Activated naive CD4-positive, alpha-beta T cell treated with anti-CD3 and anti-CD28 coated beads for 36 hours (primary cell): ENCODE measurements at regions of chr2 and their contacts with region 1.

Region 1: DNA sequence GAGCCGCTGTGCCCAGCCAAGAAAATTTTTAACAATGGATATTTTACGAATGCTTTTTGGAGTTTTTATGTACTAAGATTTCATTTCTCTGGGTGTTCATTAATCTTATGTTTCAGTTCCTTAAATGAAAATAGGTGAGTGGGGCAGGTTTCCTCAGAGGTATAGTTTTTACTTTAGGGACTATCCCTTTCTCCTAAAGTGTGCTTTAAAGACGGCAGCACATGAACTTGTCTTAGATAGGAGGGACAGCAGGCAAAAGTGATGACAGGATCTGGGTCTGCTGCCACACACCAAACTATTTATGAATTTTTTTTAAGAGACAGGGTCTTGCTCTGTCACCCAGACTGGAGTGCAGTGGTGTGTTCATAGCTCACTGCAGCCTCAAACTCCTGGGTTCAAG is 8.0 kb upstream of the REL start:
- DNase-seq: peak; percentile 51
- H3K4me3 Mint-ChIP-seq: no peak overlapping the region
- H3K27ac Mint-ChIP-seq: peak overlapping the region; percentile 69
- H3K4me1 Mint-ChIP-seq: peaks cover 32% of the 10 kb centered on the region
- H3K27me3 Mint-ChIP-seq: no peaks in the 10 kb centered on the region

Region 2: GRCh38 chr2:60756191-60757041 is 117.0 kb before region 1 on chr2 and contains the start of gene PAPOLG:
- CTCF ChIA-PET with region 1: no interaction called
- intact Hi-C with region 1: loop called (anchors 1 kb)
- DNase-seq: peak; percentile 99
- H3K4me3 Mint-ChIP-seq: peak within 1 kb of the TSS; percentile 99
- H3K27ac Mint-ChIP-seq: peak within 1 kb of the TSS; percentile 97
- H3K4me1 Mint-ChIP-seq: peaks cover 40% of the 10 kb centered on the region
- H3K27me3 Mint-ChIP-seq: no peaks in the 10 kb centered on the region
- total RNA-seq, gene PAPOLG: 14.1 to 16.1 TPM

Region 3: DNA sequence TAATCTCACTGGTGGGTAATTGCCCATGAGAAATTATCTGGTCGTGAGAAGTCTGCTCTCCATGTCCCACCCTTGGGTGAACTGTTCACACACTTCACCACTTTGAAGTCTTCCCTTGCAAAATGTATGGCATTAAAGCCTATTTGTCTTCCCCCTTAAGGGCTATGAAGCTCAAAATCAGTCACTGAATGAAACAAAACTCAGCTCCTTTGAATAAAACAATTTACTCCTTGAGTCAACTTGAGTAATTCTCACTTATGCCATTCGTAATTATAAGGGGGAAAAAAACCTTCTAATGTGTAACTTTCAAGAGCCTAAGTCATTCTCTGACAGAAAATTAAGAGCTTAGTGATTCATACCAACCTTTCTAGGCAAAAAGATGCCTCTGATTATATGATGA is 40.8 kb before region 1 on chr2:
- CTCF ChIA-PET with region 1: interaction called, 3 read pairs
- intact Hi-C with region 1: loop called (anchors 1 kb)
- DNase-seq: no peak
- H3K4me3 Mint-ChIP-seq: no peak overlapping the region
- H3K27ac Mint-ChIP-seq: peak overlapping the region; percentile 15
- H3K4me1 Mint-ChIP-seq: peaks cover 42% of the 10 kb centered on the region
- H3K27me3 Mint-ChIP-seq: no peaks in the 10 kb centered on the region

Region 4: DNA sequence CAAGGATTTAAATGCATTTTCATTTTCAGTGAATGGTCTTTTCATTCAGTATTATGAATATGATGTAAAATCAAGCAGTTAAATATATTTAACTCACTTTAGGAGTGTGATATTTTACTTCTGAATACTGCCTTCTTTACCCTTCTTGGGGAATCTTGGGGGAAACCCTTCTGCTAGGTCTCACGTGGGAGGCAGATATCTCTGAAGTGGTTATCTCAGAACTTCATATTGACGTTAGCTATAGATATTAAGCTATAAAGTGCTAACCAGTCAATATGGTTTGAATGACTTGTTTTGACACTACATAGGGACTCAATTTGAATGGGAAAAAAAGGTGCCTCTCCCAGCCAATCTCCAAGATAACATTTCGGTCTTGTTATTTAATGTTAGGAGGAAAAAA is 17.8 kb after region 1 on chr2:
- CTCF ChIA-PET with region 1: interaction called, 3 read pairs
- intact Hi-C with region 1: loop called (anchors 1 kb)
- DNase-seq: peak; percentile 52
- H3K4me3 Mint-ChIP-seq: no peak overlapping the region
- H3K27ac Mint-ChIP-seq: peak overlapping the region; percentile 70
- H3K4me1 Mint-ChIP-seq: peaks cover 59% of the 10 kb centered on the region
- H3K27me3 Mint-ChIP-seq: no peaks in the 10 kb centered on the region

Region 5: GRCh38 chr2:60966507-60967405 is 93.4 kb after region 1 on chr2:
- CTCF ChIA-PET with region 1: interaction called, 3 read pairs
- intact Hi-C with region 1: loop called (anchors 1 kb)
- DNase-seq: no peak
- H3K4me3 Mint-ChIP-seq: peak overlapping the region; percentile 11
- H3K27ac Mint-ChIP-seq: peak overlapping the region; percentile 62
- H3K4me1 Mint-ChIP-seq: peaks cover 62% of the 10 kb centered on the region
- H3K27me3 Mint-ChIP-seq: no peaks in the 10 kb centered on the region

Region 6: GRCh38 chr2:60992985-60993392 is 119.6 kb after region 1 on chr2:
- CTCF ChIA-PET with region 1: interaction called, 7 read pairs
- intact Hi-C with region 1: loop called (anchors 1 kb)
- DNase-seq: peak; percentile 32
- H3K4me3 Mint-ChIP-seq: no peak overlapping the region
- H3K27ac Mint-ChIP-seq: no peak overlapping the region
- H3K4me1 Mint-ChIP-seq: peaks cover 5% of the 10 kb centered on the region
- H3K27me3 Mint-ChIP-seq: no peaks in the 10 kb centered on the region

Region 7: GRCh38 chr2:61016808-61017555 is 143.6 kb after region 1 on chr2:
- CTCF ChIA-PET with region 1: interaction called, 3 read pairs
- intact Hi-C with region 1: loop called (anchors 2 kb)
- DNase-seq: peak; percentile 82
- H3K4me3 Mint-ChIP-seq: peak overlapping the region; percentile 98
- H3K27ac Mint-ChIP-seq: peak overlapping the region; percentile 95
- H3K4me1 Mint-ChIP-seq: peaks cover 43% of the 10 kb centered on the region
- H3K27me3 Mint-ChIP-seq: no peaks in the 10 kb centered on the region